GM18951 (cell line): ENCODE measurements at regions of chr4 and their contacts with region 1.

Region 1: DNA sequence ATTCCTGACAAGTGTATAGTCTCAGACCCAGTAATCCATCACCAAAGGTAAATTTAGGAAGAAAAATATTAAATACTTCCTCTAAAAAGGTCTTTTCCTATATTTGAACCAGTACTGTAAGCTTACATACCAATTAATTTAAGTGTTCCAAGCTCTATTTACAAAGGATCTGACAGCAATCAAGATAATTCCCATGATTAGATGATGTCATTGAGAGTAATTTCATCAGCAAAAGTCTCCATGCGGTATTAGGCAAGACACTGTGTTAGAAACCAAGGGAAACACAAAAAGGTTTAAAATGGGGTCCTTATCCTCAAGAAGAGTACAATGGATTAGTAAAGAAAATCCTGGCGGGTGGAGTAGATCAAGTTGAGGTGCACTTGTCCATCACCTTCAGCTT is 198.5 kb downstream of the PRDM5 start:
- POLR2A ChIP-seq: no peak

Region 2: DNA sequence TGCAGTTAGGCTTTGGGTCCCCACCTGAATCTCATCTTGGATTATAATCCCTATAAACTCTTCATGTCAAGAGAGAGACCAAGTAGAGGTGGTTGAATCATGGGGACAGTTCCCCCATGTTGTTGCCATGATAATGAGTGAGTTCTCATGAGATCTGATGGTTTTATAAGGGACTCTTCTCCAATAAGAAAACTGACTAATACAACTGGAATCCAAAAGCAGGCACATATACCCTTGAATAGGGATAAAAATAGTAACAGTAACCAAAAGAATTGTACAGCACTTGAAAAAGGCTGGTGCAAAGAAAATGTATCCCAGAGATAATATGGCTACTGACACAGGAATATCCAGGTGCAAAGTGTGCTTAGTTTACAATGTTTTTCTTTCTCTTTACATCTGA is 305.8 kb before region 1 on chr4:
- in situ Hi-C with region 1: no loop called
- POLR2A ChIP-seq: no peak

Region 3: DNA sequence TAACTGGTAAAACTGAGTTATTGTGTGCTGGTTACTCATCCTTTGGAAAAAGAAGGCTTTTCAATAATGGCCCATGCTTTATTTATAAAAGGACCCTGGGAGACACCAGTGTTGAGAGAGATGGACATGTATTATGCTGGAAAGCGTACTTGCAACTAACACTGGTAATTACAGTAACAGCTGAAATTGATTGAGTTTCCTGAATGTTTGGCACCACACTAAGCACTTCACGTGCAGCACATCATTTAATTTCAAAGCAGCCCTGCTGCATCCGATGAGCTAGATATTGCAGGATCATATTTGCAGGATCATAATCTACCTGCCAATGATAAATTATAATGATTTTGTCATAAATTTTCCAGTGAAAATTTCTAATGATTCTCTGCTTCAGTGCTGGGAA is 575.4 kb after region 1 on chr4:
- in situ Hi-C with region 1: loop called (anchors 10 kb)
- POLR2A ChIP-seq: no peak